H1 (cell line): ENCODE measurements at regions of chr4 and their contacts with region 1.

Region 1: DNA sequence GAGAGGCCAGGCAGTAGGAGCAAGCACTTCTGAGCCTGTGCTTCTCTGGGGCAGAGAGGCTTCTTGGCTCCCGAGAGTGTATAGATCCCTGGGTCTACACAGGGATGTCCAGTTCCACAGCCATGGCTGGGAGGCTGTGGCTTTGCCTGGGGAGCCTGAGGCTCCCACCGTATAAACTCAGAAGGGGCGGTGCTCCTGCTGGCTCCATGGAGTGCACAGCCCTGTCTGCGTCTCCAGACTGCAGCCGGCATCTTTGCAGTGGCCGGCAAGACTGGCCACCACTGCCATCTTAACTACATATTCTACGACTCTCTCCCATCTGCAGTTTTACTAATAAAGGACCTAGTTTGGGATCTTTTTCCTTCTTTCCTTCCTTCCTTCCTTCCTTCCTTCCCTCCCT is 1253.8 kb downstream of the C4orf33 start:
- DNase-seq: no peak
- H3K4me3 ChIP-seq: no peak overlapping the region
- H3K27ac ChIP-seq: no peak overlapping the region
- H3K4me1 ChIP-seq: no peaks in the 10 kb centered on the region
- H3K27me3 ChIP-seq: no peaks in the 10 kb centered on the region
- CTCF ChIP-seq: no peak
- EP300 ChIP-seq: no peak
- POLR2A ChIP-seq: no peak
- RAD21 ChIP-seq: no peak

Region 2: GRCh38 chr4:130336585-130337217 is 13.0 kb before region 1 on chr4:
- CTCF ChIA-PET with region 1: interaction called, 15 read pairs
- POLR2A ChIA-PET with region 1: no interaction called
- DNase-seq: no peak
- H3K4me3 ChIP-seq: no peak overlapping the region
- H3K27ac ChIP-seq: no peak overlapping the region
- H3K4me1 ChIP-seq: no peaks in the 10 kb centered on the region; a peak in 2 of 7 replicates
- H3K27me3 ChIP-seq: peaks cover 0 to 1% (median 0%) of the 10 kb centered on the region in 4 experiments; a peak in 1 of 7 replicates
- CTCF ChIP-seq: peak in 2 of 3 experiments; percentile 8 to 47; a peak in 2 of 4 replicates
- EP300 ChIP-seq: no peak
- POLR2A ChIP-seq: no peak
- RAD21 ChIP-seq: peak; percentile 34 to 38

Region 3: GRCh38 chr4:130486186-130486585 is 136.4 kb after region 1 on chr4:
- CTCF ChIA-PET with region 1: no interaction called
- POLR2A ChIA-PET with region 1: no interaction called
- DNase-seq: no peak
- H3K4me3 ChIP-seq: no peak overlapping the region
- H3K27ac ChIP-seq: no peak overlapping the region
- H3K4me1 ChIP-seq: no peaks in the 10 kb centered on the region
- H3K27me3 ChIP-seq: no peaks in the 10 kb centered on the region
- CTCF ChIP-seq: no peak
- EP300 ChIP-seq: no peak
- POLR2A ChIP-seq: no peak
- RAD21 ChIP-seq: no peak

Region 4: DNA sequence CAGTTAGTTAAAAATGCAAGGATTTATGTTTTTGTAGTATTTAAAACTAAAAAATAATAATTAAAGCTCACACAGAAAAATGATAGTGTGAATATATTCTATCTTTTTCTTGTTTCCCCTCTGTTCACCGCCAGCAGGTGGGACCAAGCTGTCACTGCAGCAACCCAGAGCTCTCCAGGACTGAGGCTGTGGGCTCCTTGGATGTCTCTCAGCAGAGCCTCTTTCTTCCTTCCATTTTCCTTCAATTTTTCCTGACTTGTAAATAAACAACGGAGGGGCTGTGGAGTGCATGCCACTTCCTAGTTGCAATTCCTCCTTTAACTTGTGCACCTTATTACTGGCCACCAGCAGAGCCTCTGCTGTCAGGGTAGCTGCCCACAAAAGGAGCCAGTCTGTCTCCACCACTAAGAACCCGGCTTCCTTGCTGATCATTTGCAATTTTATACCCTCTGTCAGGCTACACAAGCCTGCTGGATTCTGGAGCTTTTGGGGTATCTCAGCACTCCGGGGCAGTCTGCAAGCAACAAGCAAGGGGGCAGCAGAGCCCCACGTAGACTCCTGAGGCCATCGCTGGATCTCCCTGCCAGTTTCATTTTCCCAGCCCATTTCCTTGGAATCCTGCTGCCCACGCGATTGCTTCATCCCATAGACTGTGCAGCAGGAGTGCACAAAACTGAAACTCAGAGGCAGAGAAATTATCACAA is 213.6 kb after region 1 on chr4:
- CTCF ChIA-PET with region 1: no interaction called
- POLR2A ChIA-PET with region 1: no interaction called
- DNase-seq: peak; percentile 57 to 66
- H3K4me3 ChIP-seq: no peak overlapping the region; a peak in 1 of 8 replicates
- H3K27ac ChIP-seq: no peak overlapping the region
- H3K4me1 ChIP-seq: peaks cover 0 to 7% (median 0%) of the 10 kb centered on the region in 4 experiments; a peak in 3 of 7 replicates
- H3K27me3 ChIP-seq: no peaks in the 10 kb centered on the region
- CTCF ChIP-seq: peak; percentile 75 to 88 (median 78)
- EP300 ChIP-seq: no peak
- POLR2A ChIP-seq: no peak
- RAD21 ChIP-seq: peak; percentile 96